A673 (cell line): ENCODE measurements at regions of chrX and their contacts with region 1.

Region 1: DNA sequence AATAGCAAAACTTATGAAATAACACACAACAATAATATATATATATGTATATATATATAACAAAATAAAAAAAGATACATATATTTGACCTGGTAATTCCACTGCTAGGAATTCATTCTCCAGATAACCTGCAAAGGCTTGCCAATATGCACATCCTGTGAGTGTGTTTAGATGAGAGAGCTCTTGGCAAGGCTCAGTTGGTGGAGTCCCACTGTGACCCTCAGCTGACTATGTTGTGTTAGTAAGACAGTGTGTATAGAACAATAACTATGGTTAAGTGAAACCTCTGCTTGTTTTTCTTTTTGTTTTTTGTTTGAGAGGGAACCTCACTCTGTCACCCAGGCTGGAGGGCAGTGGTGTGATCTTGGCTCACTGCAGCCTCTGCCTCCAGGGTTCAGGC is 39.5 kb upstream of the RBMX start:
- DNase-seq: no peak
- H3K4me3 ChIP-seq: no peak overlapping the region
- H3K27ac ChIP-seq: no peak overlapping the region
- H3K4me1 ChIP-seq: no peaks in the 10 kb centered on the region
- H3K27me3 ChIP-seq: no peaks in the 10 kb centered on the region
- CTCF ChIP-seq: no peak

Region 2: GRCh38 chrX:136608295-136609171 is 311.5 kb before region 1 on chrX:
- CTCF ChIA-PET with region 1: no interaction called
- POLR2A ChIA-PET with region 1: no interaction called
- intact Hi-C with region 1: loop called (anchors 10 kb)
- DNase-seq: peak; percentile 52
- H3K4me3 ChIP-seq: no peak overlapping the region
- H3K27ac ChIP-seq: no peak overlapping the region
- H3K4me1 ChIP-seq: peaks cover 18% of the 10 kb centered on the region
- H3K27me3 ChIP-seq: no peaks in the 10 kb centered on the region
- CTCF ChIP-seq: peak; percentile 56

Region 3: DNA sequence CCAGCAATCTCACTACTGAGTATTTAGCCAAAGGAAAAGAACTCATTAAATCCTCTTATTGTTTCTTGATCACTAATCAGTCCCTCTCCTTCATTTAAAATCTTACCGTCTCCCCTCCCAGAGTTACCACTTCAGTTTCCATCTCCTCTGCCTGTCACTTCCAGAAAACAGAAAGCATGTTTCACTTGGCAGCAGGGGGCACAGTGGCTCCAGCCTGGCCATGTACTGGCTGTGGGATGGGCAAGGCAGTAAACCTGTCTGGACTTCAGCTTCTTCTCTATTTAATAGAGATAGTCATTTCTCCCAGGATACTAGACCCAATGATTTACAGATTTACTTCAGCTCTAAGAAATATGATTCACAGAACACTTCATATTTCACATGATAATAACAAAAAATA is 208.9 kb before region 1 on chrX:
- CTCF ChIA-PET with region 1: no interaction called
- POLR2A ChIA-PET with region 1: no interaction called
- intact Hi-C with region 1: loop called (anchors 2 kb)
- DNase-seq: peak; percentile 49
- H3K4me3 ChIP-seq: no peak overlapping the region
- H3K27ac ChIP-seq: no peak overlapping the region
- H3K4me1 ChIP-seq: peaks cover 12% of the 10 kb centered on the region
- H3K27me3 ChIP-seq: no peaks in the 10 kb centered on the region
- CTCF ChIP-seq: peak; percentile 53

Region 4: GRCh38 chrX:136866337-136867095 is 53.5 kb before region 1 on chrX:
- CTCF ChIA-PET with region 1: no interaction called
- POLR2A ChIA-PET with region 1: no interaction called
- intact Hi-C with region 1: loop called (anchors 5 kb)
- DNase-seq: no peak
- H3K4me3 ChIP-seq: no peak overlapping the region
- H3K27ac ChIP-seq: no peak overlapping the region
- H3K4me1 ChIP-seq: peaks cover 4% of the 10 kb centered on the region
- H3K27me3 ChIP-seq: no peaks in the 10 kb centered on the region
- CTCF ChIP-seq: no peak